Activated CD4-positive, alpha-beta memory T cell treated with anti-CD3 and anti-CD28 coated beads for 36 hours (primary cell): ENCODE measurements at regions of chr10 and their contacts with region 1.

Region 1: DNA sequence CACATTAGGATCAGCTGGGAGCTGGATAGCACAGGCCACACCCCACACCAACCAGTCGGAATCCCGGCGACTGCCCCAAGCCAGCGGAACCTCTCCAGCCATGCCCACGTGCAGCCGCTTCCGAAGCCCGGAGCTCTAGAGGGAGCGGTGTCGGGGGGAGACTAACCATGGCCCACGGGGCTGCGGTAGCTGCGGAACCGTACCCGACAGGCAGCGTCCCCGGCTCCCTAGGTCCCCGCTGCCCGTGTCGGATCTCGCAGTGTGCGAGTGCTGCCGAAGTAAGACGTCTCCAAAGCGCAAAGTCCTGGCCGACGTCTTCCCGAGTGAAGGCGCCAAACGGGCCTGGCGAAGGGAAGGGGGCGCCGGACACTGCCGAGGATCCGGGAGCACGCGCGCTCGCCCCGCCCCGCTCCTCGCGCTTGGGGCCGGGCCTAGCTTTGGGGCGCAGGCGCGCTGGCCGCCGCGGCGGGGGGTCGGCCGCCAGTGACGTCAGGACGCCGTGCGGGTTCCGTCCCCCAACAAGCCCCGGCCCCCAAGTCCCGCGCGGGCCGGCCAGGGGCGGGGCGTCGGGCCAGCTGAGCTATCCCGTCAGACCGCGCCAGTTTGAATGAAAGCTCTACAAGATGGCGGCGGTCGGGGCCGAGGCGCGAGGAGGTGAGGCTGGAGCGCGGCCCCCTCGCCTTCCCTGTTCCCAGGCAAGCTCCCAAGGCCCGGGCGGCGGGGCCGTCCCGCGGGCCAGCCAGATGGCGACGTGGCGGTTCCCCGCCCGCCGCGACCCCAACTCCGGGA is at the start of gene SUV39H2:
- DNase-seq: peak; percentile 96
- H3K4me3 Mint-ChIP-seq: peak within 1 kb of the TSS; percentile 94
- H3K27ac Mint-ChIP-seq: peak within 1 kb of the TSS; percentile 80
- H3K4me1 Mint-ChIP-seq: peaks cover 41% of the 10 kb centered on the region
- H3K27me3 Mint-ChIP-seq: no peaks in the 10 kb centered on the region
- total RNA-seq, gene SUV39H2: 38.7 to 39.8 TPM

Region 2: DNA sequence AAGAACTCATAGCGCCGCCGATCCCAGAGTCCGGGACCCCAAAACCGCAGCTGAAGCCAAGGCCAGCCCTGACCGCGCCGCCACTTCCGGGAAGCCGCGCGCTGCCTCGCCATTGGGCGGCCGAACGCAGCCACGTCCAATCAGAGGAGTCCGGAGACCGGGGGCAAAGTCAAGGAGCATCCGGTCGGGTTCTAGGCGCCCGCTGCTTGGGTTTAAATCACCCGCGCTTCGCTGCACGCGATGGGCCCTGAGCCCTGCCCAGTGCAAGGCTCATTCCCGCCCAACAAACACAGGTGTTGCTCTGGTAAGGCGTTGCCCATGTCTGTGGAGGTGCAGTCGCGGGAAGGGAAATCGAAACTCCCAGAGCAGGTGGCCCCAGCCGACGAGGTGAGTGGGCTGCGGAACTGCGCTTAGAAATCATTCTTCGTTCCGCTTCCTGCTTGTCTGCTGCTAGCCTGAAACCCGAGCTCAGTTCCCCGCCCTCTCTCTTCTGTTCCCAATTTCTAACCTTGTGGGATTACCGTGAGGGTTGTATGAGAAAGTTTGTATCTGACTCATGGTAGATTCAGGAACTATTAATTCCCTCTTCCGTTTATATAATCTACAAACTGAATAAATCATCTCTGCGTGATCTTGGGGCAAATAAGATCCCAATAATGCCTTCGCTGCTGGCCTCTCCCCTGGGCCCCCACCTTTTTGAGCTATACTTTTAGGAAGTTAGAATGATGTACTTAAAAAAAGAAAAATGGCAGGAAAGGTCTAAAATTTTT is 75.7 kb after region 1 on chr10 and contains the start of gene DCLRE1C:
- CTCF ChIA-PET with region 1: interaction called, 4 read pairs
- POLR2A ChIA-PET with region 1: interaction called, 14 read pairs
- intact Hi-C with region 1: loop called (anchors 1 kb)
- DNase-seq: peak; percentile 93
- H3K4me3 Mint-ChIP-seq: peak within 1 kb of the TSS; percentile 91
- H3K27ac Mint-ChIP-seq: peak within 1 kb of the TSS; percentile 96
- H3K4me1 Mint-ChIP-seq: peaks cover 47% of the 10 kb centered on the region
- H3K27me3 Mint-ChIP-seq: no peaks in the 10 kb centered on the region
- total RNA-seq, gene DCLRE1C: 17.2 to 18.3 TPM

Region 3: DNA sequence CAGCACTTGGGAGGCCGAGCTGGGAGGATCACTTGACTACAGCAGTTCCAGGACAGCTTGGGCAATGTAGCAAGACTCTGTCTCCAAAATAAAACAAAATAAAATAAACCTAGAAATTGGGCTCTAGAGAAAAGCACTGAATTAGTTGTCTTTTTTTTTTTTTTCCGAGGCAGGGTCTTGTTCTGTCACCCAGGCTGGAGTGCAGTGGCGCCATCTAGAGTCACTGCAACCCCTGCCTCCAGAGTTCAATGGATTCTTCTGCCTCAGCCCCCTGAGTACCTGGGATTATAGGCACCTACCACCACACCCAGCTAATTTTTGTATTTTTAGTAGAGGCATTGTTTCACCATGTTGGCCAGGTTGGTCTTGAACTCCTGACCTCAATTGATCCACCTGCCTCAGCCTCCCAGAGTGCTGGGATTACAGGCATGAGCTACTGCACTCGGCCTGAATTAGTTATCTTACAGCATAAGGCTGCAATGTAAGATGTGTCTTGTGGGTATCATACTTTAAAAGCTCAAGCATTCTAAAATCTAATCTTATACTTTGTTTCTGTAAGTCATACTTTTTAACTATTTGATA is 93.5 kb after region 1 on chr10:
- CTCF ChIA-PET with region 1: interaction called, 6 read pairs
- POLR2A ChIA-PET with region 1: no interaction called
- intact Hi-C with region 1: loop called (anchors 5 kb)
- DNase-seq: peak; percentile 66
- H3K4me3 Mint-ChIP-seq: no peak overlapping the region
- H3K27ac Mint-ChIP-seq: no peak overlapping the region
- H3K4me1 Mint-ChIP-seq: peaks cover under 1% of the 10 kb centered on the region
- H3K27me3 Mint-ChIP-seq: peaks cover 15% of the 10 kb centered on the region

Region 4: GRCh38 chr10:15091418-15091817 is 213.0 kb after region 1 on chr10:
- CTCF ChIA-PET with region 1: no interaction called
- POLR2A ChIA-PET with region 1: no interaction called
- intact Hi-C with region 1: no loop called
- DNase-seq: no peak
- H3K4me3 Mint-ChIP-seq: no peak overlapping the region
- H3K27ac Mint-ChIP-seq: no peak overlapping the region
- H3K4me1 Mint-ChIP-seq: peaks cover 3% of the 10 kb centered on the region
- H3K27me3 Mint-ChIP-seq: no peaks in the 10 kb centered on the region